IMR-90 (cell line): ENCODE measurements at regions of chr9 and their contacts with region 1.

Region 1: GRCh38 chr9:16964228-16964627 is 93.8 kb upstream of the BNC2 start:
- DNase-seq: peak; percentile 100
- ATAC-seq: peak; percentile 99
- H3K4me3 ChIP-seq: no peak overlapping the region
- H3K27ac ChIP-seq: peak overlapping the region; percentile 96
- H3K4me1 ChIP-seq: peaks cover 10% of the 10 kb centered on the region
- H3K27me3 ChIP-seq: no peaks in the 10 kb centered on the region
- CTCF ChIP-seq: no peak
- POLR2A ChIP-seq: 0 out of 2 replicates have a peak, but pooled peaks have one; percentile 45
- RAD21 ChIP-seq: no peak; the same call in 1 of the 2 replicates

Region 2: GRCh38 chr9:16591092-16591491 is 373.1 kb before region 1 on chr9:
- CTCF ChIA-PET with region 1: no interaction called
- POLR2A ChIA-PET with region 1: no interaction called
- dilution Hi-C with region 1: no loop called
- in situ Hi-C with region 1: no loop called
- intact Hi-C with region 1: no loop called
- DNase-seq: peak; percentile 37
- ATAC-seq: peak; percentile 17; the same call in 1 of the 2 replicates
- H3K4me3 ChIP-seq: no peak overlapping the region
- H3K27ac ChIP-seq: no peak overlapping the region
- H3K4me1 ChIP-seq: peaks cover 4% of the 10 kb centered on the region; the same call in 1 of the 2 replicates
- H3K27me3 ChIP-seq: no peaks in the 10 kb centered on the region
- CTCF ChIP-seq: no peak
- POLR2A ChIP-seq: no peak
- RAD21 ChIP-seq: no peak

Region 3: DNA sequence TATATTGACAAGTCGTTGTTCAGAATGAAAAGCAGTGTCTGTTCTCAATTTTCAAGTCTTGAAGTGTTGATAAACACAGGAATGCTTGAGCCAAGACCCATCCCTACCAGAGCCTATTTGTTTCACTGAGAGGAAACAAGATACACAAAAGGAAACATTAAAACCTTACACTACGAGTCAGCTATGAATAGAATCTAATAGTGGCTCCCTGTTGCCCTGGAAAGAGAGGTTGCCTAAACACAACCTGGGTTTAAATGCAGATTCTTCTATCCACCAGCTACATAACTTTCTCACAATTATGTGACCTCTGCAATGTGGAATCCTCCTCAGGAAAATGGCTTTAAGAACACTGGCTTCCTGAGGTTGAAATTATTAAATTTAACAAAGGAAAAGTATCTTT is 64.6 kb before region 1 on chr9:
- CTCF ChIA-PET with region 1: no interaction called
- POLR2A ChIA-PET with region 1: no interaction called
- dilution Hi-C with region 1: no loop called
- in situ Hi-C with region 1: no loop called
- intact Hi-C with region 1: loop called (anchors 5 kb)
- DNase-seq: peak; percentile 59
- ATAC-seq: peak; percentile 86
- H3K4me3 ChIP-seq: no peak overlapping the region
- H3K27ac ChIP-seq: no peak overlapping the region
- H3K4me1 ChIP-seq: no peaks in the 10 kb centered on the region
- H3K27me3 ChIP-seq: no peaks in the 10 kb centered on the region
- CTCF ChIP-seq: no peak
- POLR2A ChIP-seq: no peak
- RAD21 ChIP-seq: no peak

Region 4: DNA sequence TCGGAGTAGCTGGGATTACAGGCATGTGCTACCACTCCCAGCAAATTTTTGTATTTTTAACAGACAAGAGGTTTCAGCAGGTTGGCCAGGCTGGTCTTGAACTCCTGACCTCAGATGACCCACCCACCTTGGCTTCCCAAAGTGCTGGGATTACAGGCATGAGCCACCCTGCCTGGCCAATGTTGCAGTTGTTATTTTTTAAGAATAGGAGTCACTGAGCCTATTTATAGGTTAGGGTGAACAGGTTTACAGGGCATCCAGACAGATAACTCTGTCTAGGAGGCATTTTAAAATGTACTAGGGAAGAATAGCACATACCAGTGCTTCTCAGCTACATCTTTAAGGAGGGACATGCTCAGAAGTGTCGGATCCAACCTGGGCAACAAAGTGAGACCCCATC is 33.6 kb before region 1 on chr9:
- CTCF ChIA-PET with region 1: no interaction called
- POLR2A ChIA-PET with region 1: no interaction called
- dilution Hi-C with region 1: no loop called
- in situ Hi-C with region 1: no loop called
- intact Hi-C with region 1: loop called (anchors 1 kb)
- DNase-seq: no peak
- ATAC-seq: no peak
- H3K4me3 ChIP-seq: no peak overlapping the region
- H3K27ac ChIP-seq: no peak overlapping the region
- H3K4me1 ChIP-seq: peaks cover 3% of the 10 kb centered on the region; the same call in 1 of the 2 replicates
- H3K27me3 ChIP-seq: no peaks in the 10 kb centered on the region
- CTCF ChIP-seq: no peak
- POLR2A ChIP-seq: no peak
- RAD21 ChIP-seq: no peak

Region 5: DNA sequence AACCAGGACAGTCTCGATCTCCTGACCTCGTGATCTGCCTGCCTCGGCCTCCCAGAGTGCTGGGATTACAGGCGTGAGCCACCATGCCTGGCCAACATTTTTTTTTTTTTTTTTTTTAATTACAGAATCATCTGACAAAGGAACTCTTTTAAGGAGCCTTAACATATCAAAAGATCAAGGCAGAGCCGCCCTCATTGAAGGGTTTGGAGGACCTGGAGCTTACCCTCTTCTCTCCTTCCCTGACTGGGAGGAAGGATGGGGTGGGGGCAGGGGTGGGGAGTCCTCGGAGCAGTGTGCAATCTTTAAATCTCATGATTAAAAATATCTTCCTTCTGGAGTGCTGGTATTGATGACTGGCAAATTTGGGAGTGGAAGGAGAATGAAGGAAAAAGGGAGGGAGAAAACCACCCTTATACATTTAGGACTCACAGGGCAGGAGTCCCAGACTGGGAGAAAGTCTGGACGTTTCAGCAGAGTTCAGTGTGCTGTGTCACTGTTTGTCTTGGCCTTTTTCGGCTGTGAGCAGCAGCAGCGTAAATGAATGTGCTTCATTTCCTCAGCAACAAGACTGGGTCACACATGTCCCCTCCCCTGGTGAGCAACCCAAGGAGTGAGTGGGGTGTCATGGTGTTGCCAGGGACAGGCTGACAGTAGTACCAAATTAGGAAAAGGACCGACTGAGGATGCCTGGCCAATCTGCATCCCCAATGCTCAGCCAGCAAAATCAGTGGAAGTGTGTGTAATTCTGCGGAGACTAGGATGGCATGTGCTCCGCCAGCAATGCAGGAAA is 21.5 kb after region 1 on chr9:
- CTCF ChIA-PET with region 1: interaction called, 3 read pairs
- POLR2A ChIA-PET with region 1: no interaction called
- dilution Hi-C with region 1: no loop called
- in situ Hi-C with region 1: no loop called
- intact Hi-C with region 1: loop called (anchors 1 kb)
- DNase-seq: peak; percentile 93
- ATAC-seq: peak; percentile 79
- H3K4me3 ChIP-seq: peak overlapping the region; percentile 0; the same call in 1 of the 2 replicates
- H3K27ac ChIP-seq: peak overlapping the region; percentile 88
- H3K4me1 ChIP-seq: peaks cover 16% of the 10 kb centered on the region
- H3K27me3 ChIP-seq: no peaks in the 10 kb centered on the region
- CTCF ChIP-seq: no peak
- POLR2A ChIP-seq: peak; percentile 66; the same call in 1 of the 2 replicates
- RAD21 ChIP-seq: no peak; the same call in 1 of the 2 replicates

Region 6: DNA sequence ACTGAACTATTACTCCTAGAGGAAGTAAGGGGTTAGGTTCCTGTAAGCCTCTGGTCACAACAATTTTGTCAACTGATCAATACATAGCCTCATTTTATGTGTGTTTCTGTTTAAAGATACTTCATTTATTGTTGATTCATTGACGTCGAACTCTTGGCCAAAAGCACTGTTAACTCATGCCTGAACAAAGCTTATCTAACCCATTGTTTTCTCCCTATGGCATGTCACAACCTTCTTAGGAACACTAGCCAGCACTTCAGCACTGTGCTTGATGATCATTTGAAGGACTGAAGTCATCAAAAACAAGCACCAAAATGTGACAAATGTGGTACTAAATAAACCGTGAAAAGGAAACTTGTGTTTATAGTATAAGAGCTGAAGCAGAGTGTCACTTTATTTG is 184.1 kb after region 1 on chr9:
- CTCF ChIA-PET with region 1: no interaction called
- POLR2A ChIA-PET with region 1: no interaction called
- dilution Hi-C with region 1: no loop called
- in situ Hi-C with region 1: no loop called
- intact Hi-C with region 1: no loop called
- DNase-seq: no peak
- ATAC-seq: no peak
- H3K4me3 ChIP-seq: no peak overlapping the region
- H3K27ac ChIP-seq: no peak overlapping the region
- H3K4me1 ChIP-seq: no peaks in the 10 kb centered on the region
- H3K27me3 ChIP-seq: no peaks in the 10 kb centered on the region
- CTCF ChIP-seq: no peak
- POLR2A ChIP-seq: no peak
- RAD21 ChIP-seq: no peak